ENCODE measurements at regions of chr11 and their contacts with region 1.

Region 1: DNA sequence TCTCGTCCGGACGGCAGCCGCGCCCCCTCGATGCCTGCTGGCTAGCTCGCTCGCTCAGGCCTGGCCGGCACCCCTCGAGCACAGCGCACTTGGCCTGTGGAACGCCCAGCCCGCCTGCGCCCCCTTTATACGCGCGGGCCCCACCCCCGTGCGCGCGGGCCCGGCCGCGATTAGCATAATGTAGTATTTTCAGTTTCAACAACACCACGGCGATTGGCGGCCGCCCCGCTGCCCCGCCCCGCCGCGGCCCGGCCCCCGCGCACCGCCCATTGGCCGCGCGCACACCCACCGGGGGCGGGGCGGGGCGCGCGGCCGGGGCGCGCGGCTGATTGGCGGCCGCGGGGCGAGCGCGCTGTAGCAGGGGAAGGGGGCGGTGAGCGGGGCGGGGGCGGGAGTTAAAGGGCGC is at the start of gene CDKN1C:
- DNase-seq: peak; percentile 76
- H3K4me3 Mint-ChIP-seq: peak within 1 kb of the TSS; percentile 71
- H3K27ac Mint-ChIP-seq: no peak within 1 kb of the TSS
- H3K4me1 Mint-ChIP-seq: no peaks in the 10 kb centered on the region
- H3K27me3 Mint-ChIP-seq: peaks cover 3% of the 10 kb centered on the region
- total RNA-seq, gene CDKN1C: 0.17 to 0.26 TPM

Region 2: GRCh38 chr11:2428322-2428795 is 457.3 kb before region 1 on chr11:
- CTCF ChIA-PET with region 1: interaction called, 9 read pairs
- intact Hi-C with region 1: loop called (anchors 1 kb)
- DNase-seq: peak; percentile 90
- H3K4me3 Mint-ChIP-seq: no peak overlapping the region
- H3K27ac Mint-ChIP-seq: no peak overlapping the region
- H3K4me1 Mint-ChIP-seq: no peaks in the 10 kb centered on the region
- H3K27me3 Mint-ChIP-seq: no peaks in the 10 kb centered on the region

Region 3: GRCh38 chr11:2699531-2700414 is 185.9 kb before region 1 on chr11 and contains the start of gene KCNQ1OT1:
- CTCF ChIA-PET with region 1: interaction called, 4 read pairs
- intact Hi-C with region 1: loop called (anchors 2 kb)
- DNase-seq: peak; percentile 90
- H3K4me3 Mint-ChIP-seq: peak within 1 kb of the TSS; percentile 83
- H3K27ac Mint-ChIP-seq: no peak within 1 kb of the TSS
- H3K4me1 Mint-ChIP-seq: peaks cover 8% of the 10 kb centered on the region
- H3K27me3 Mint-ChIP-seq: no peaks in the 10 kb centered on the region
- total RNA-seq, gene KCNQ1OT1: 0.17 to 0.20 TPM

Region 4: DNA sequence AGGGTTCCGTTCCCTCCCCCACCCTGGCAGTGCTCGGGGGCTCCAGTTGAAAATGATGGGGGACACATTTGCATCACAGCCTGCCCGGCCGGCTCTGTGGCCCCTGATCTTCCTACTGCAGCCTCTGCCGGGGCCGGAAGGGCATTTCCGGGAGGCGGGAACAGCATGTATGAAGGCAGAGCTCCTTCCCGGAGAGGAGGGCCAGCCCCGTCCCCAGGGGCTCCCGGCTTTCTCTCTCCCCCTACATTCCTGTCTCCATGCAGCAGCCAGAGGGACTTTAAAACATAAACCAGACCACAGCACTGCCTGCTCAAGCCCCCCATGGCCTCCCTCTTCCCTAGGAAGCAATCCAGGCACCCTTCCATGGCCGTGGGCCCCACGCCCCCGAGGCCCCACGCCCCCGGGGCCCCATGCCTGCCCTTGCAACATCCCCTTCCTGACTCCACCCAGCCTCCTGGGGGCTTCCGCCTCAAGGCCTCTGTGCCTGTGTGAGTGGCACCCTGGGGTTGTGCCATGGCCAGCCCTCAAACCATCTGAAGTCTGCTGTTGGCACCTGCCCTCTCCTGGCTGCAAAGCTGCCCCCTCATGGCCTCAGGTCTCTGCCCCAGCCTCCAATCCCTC is 73.2 kb before region 1 on chr11:
- CTCF ChIA-PET with region 1: no interaction called
- intact Hi-C with region 1: no loop called
- DNase-seq: peak; percentile 15
- H3K4me3 Mint-ChIP-seq: no peak overlapping the region
- H3K27ac Mint-ChIP-seq: peak overlapping the region; percentile 65
- H3K4me1 Mint-ChIP-seq: peaks cover 24% of the 10 kb centered on the region
- H3K27me3 Mint-ChIP-seq: no peaks in the 10 kb centered on the region

Region 5: DNA sequence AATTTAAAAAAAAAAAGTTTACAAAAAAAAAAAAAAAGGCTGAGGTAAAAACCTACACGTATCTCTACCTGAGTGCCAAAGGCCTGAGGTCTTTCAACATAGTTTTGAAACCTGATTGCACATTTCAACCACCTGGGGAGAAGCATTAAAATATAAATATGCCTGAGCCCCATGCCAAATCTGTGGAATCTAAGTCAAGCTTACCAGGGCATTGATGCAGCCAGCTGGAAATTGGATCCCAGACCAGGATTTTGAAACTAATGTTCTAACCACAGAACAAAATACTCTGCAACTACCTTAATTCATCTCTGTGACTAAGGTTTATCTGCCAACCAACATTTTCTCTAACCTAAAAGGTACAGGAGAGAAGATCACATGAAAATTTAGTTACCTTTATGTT is 824.3 kb after region 1 on chr11:
- CTCF ChIA-PET with region 1: no interaction called
- intact Hi-C with region 1: no loop called
- DNase-seq: no peak
- H3K4me3 Mint-ChIP-seq: no peak overlapping the region
- H3K27ac Mint-ChIP-seq: no peak overlapping the region
- H3K4me1 Mint-ChIP-seq: peaks cover 3% of the 10 kb centered on the region
- H3K27me3 Mint-ChIP-seq: no peaks in the 10 kb centered on the region

Measured in activated naive CD4-positive, alpha-beta T cell treated with anti-CD3 and anti-CD28 coated beads for 36 hours (primary cell).